ENCODE measurements at regions of chr12 and their contacts with region 1.

Region 1: DNA sequence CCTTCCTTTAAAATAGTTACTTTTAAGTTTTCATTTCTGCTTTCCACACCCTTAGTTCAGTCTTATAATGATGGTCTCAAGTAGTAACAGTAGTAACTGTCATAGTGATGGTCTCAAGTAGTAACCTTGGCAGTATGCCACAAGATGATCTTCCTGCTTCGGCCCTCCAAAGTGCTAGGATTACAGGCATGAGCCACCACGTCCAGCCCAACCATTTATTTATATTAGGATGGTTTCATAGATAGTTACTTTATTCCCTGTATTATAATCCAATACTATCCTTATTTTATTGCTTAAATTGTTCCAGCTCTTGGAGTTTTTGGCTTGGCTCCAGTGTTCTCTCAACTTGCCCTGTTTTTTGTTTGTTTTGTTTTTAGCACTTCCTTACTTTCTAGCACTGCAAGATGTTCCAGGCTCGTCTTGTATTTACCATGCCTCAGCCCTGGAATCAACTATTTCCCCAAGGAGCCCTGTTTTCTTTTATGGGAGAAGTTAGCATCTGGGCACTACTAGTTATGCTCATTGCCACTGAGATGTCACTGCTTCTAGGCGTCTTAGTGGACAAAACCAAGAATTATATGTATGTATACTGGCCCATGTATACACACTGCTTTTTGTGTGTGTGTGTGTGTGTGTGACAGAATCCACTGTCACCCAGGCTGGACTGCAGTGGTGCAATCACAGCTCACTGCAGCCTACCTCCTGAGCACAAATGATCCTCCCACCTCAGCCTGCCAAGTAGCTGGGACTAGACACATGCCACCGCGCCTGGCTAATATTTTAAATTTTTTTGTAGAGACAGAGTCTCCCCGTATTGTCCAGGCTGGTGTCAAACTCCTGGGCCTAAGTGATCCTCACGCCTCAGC is 25.4 kb downstream of the LIMA1 start:
- DNase-seq: peak; percentile 32
- H3K4me3 ChIP-seq: no peak overlapping the region
- H3K27ac ChIP-seq: no peak overlapping the region
- H3K4me1 ChIP-seq: peaks cover 7% of the 10 kb centered on the region
- H3K27me3 ChIP-seq: no peaks in the 10 kb centered on the region
- CTCF ChIP-seq: no peak

Region 2: GRCh38 chr12:49730568-49731101 is 527.3 kb before region 1 on chr12:
- CTCF ChIA-PET with region 1: no interaction called
- POLR2A ChIA-PET with region 1: no interaction called
- intact Hi-C with region 1: no loop called
- DNase-seq: no peak
- H3K4me3 ChIP-seq: no peak overlapping the region
- H3K27ac ChIP-seq: no peak overlapping the region
- H3K4me1 ChIP-seq: no peaks in the 10 kb centered on the region
- H3K27me3 ChIP-seq: no peaks in the 10 kb centered on the region
- CTCF ChIP-seq: no peak

Region 3: DNA sequence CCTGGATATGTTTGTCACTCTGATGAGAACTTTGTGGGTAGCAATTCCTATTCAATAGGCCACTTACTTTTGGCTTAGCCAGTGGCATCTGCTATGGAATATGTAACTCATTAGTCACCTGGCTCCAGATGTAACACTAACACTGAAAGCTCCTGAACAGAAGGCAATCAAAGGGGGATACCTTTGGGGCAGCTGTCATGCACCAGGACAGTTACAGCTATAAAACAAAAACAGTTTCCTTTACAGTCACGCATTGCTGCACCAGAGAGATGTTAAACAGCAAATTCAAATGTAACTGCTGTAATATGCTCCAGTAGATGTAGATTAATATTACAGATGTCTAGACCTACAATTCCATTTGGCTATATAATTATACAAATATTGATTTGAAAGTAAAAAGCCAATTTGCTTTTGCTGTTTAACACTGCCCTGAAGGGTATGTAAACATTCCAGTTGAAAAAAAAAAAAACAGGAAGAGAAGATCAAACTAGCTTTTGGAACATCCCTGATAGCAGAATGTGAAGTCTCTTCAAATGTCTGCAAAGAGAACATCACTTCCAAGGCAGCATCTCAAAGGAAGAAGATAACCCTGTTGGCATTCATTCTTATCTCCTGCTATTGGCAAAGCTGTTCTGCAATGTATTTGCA is 251.0 kb before region 1 on chr12:
- CTCF ChIA-PET with region 1: no interaction called
- POLR2A ChIA-PET with region 1: no interaction called
- intact Hi-C with region 1: no loop called
- DNase-seq: no peak
- H3K4me3 ChIP-seq: no peak overlapping the region
- H3K27ac ChIP-seq: no peak overlapping the region
- H3K4me1 ChIP-seq: no peaks in the 10 kb centered on the region
- H3K27me3 ChIP-seq: no peaks in the 10 kb centered on the region
- CTCF ChIP-seq: no peak

Region 4: DNA sequence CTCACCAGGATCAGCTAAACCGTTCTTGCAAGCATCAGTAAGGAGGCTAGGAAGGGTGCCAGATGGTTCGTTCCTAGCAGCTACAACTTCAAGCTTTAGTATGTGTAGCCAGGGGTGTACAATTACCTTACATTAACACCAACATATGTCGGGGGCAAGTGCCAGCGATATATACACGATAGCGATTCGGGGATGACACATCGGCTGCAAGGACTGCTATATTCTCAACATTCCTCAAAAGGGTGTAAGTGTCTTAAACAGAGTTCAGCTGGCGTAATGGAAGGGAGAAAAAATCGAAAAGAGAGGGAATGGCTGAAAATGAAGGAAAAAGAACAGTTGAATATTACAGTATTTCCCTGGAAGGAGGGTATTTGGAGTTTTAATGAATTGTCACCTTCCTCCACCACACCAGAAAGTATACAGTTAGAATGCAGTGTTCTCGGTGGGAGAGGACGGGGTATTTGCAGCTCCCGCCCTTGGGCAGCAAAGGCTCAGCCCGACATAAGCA is 24.9 kb after region 1 on chr12:
- CTCF ChIA-PET with region 1: interaction called, 11 read pairs
- POLR2A ChIA-PET with region 1: no interaction called
- intact Hi-C with region 1: no loop called
- DNase-seq: no peak
- H3K4me3 ChIP-seq: peak overlapping the region; percentile 78
- H3K27ac ChIP-seq: no peak overlapping the region
- H3K4me1 ChIP-seq: peaks cover 10% of the 10 kb centered on the region
- H3K27me3 ChIP-seq: no peaks in the 10 kb centered on the region
- CTCF ChIP-seq: no peak